Lower lobe of right lung (tissue), 2 donors: ENCODE measurements at regions of chr1 and their contacts with region 1.

Region 1: GRCh38 chr1:116674011-116674531 is 6.5 kb upstream of the IGSF3 start:
- DNase-seq: no peak
- ATAC-seq: no peak
- H3K4me3 ChIP-seq: no peak overlapping the region
- H3K27ac ChIP-seq: no peak overlapping the region
- H3K4me1 ChIP-seq: no peaks in the 10 kb centered on the region
- H3K27me3 ChIP-seq: no peaks in the 10 kb centered on the region
- CTCF ChIP-seq: no peak

Region 2: DNA sequence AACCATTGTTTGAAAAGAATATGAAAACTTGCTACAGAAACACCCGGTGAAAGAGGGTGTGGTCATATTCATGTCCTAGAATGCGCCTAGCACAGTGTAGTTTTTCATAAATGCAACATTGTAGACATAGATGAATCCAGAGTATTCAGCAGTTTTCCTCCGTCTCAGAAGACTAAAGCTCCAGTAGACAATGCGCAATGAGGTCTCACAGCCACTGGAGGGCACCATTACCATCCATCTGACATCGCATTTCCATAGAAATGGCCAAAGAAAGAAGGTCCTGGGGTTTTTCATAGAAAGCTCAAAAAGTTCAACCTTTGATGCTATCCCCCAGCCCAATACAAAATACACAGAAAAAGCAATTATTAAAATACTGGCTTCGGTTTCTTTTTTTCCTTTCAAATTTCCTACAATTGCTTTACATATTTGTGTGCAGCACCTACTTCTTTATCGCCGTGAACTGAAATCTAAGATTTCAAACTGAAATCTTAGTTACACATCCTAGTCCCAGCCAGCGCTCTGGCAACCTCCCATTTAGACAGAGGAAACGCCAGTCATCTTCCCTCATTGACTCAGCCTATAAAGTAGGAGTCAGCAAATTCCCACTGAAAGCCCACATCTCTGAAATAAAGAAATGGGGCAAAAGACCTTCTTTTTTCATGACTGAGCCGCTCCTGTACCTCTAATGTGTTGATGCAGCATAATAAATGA is 99.3 kb before region 1 on chr1:
- intact Hi-C with region 1: loop called (anchors 5 kb)
- DNase-seq: no peak
- ATAC-seq: no peak
- H3K4me3 ChIP-seq: no peak overlapping the region
- H3K27ac ChIP-seq: no peak overlapping the region
- H3K4me1 ChIP-seq: peaks cover 23% of the 10 kb centered on the region
- H3K27me3 ChIP-seq: no peaks in the 10 kb centered on the region
- CTCF ChIP-seq: peak; percentile 86